IMR-90 (cell line): ENCODE measurements at regions of chr1 and their contacts with region 1.

Region 1: DNA sequence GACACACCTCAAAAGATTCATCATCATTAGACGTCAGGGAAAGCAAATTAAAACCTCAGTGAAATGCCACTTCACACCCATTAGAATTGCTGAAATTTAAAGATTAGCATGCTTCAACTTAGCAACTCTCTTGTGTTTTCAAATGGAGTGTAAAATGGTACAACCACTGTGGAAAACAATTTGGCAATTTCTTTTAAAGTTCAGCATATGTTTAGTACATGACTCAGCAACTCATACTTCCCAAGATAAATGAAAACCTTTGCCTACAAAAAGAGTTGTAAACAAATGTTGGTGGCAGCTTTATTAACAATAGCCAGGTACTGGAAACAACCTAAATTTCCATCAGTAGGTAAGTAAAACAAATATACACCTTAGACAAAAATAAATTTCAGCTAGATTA is 42.7 kb downstream of the ST3GAL3 start:
- DNase-seq: peak; percentile 24
- ATAC-seq: no peak
- H3K4me3 ChIP-seq: no peak overlapping the region
- H3K27ac ChIP-seq: no peak overlapping the region
- H3K4me1 ChIP-seq: peaks cover 6% of the 10 kb centered on the region
- H3K27me3 ChIP-seq: no peaks in the 10 kb centered on the region
- CTCF ChIP-seq: no peak
- POLR2A ChIP-seq: no peak
- RAD21 ChIP-seq: no peak

Region 2: DNA sequence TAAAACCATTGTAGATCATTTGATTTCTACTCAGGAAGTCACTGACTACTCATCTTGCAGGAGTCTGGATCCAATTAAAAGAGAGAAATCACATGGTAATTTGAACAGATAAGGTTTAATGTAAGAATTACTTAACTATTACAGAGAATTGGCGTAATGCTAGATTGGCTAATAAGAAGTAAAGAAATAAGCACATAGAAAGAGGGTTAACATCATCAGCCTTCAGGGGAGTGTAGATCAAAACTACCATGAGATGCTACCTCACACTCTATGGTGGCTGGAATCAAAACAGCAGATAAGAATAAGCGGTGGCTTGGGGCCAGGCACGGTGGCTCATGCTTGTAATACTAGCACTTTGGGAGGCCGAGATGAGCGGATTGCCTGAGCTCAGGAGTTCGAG is 31.0 kb before region 1 on chr1:
- CTCF ChIA-PET with region 1: no interaction called
- POLR2A ChIA-PET with region 1: no interaction called
- dilution Hi-C with region 1: no loop called
- in situ Hi-C with region 1: no loop called
- intact Hi-C with region 1: loop called (anchors 5 kb)
- DNase-seq: peak; percentile 57
- ATAC-seq: no peak
- H3K4me3 ChIP-seq: no peak overlapping the region
- H3K27ac ChIP-seq: no peak overlapping the region
- H3K4me1 ChIP-seq: peaks cover 7% of the 10 kb centered on the region
- H3K27me3 ChIP-seq: no peaks in the 10 kb centered on the region
- CTCF ChIP-seq: no peak
- POLR2A ChIP-seq: no peak
- RAD21 ChIP-seq: no peak

Region 3: GRCh38 chr1:44730741-44731512 is 980.8 kb after region 1 on chr1 and contains the start of gene RNU5D-1:
- CTCF ChIA-PET with region 1: no interaction called
- POLR2A ChIA-PET with region 1: no interaction called
- dilution Hi-C with region 1: no loop called
- in situ Hi-C with region 1: no loop called
- intact Hi-C with region 1: no loop called
- DNase-seq: peak; percentile 98
- ATAC-seq: peak; percentile 84
- H3K4me3 ChIP-seq: peak within 1 kb of the TSS; percentile 9; the same call in 1 of the 2 replicates
- H3K27ac ChIP-seq: peak within 1 kb of the TSS; percentile 62
- H3K4me1 ChIP-seq: peaks cover 2% of the 10 kb centered on the region; the same call in 1 of the 2 replicates
- H3K27me3 ChIP-seq: no peaks in the 10 kb centered on the region
- CTCF ChIP-seq: peak; percentile 89
- POLR2A ChIP-seq: peak; percentile 99
- RAD21 ChIP-seq: peak; percentile 58
- total RNA-seq, gene RNU5D-1: not detected in 2 replicates